Activated naive CD4-positive, alpha-beta T cell treated with anti-CD3 and anti-CD28 coated beads for 36 hours (primary cell): ENCODE measurements at regions of chr14 and their contacts with region 1.

Region 1: GRCh38 chr14:68420350-68420749 is 372.5 kb downstream of the ZFP36L1 start:
- DNase-seq: no peak
- H3K4me3 Mint-ChIP-seq: no peak overlapping the region
- H3K27ac Mint-ChIP-seq: no peak overlapping the region
- H3K4me1 Mint-ChIP-seq: peaks cover 14% of the 10 kb centered on the region
- H3K27me3 Mint-ChIP-seq: no peaks in the 10 kb centered on the region

Region 2: DNA sequence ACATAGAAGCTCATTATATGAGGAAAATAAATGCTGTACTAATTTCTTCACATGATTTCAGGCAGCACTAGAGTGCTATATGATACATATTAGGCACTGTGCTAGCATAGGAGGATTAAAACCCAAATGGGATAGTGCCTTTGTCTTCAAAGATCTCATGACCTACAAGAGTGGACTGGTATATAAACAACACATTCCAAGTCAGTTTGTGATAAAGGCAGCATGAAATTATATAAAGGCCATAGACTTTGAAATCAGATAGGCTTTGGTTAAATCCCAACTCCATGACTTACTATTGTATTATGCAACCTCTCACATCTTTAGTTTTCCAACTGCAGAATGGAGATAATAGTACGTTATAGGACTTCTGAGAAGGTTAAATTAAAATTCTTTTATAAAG is 421.1 kb before region 1 on chr14:
- CTCF ChIA-PET with region 1: no interaction called
- intact Hi-C with region 1: no loop called
- DNase-seq: no peak
- H3K4me3 Mint-ChIP-seq: no peak overlapping the region
- H3K27ac Mint-ChIP-seq: no peak overlapping the region
- H3K4me1 Mint-ChIP-seq: no peaks in the 10 kb centered on the region
- H3K27me3 Mint-ChIP-seq: no peaks in the 10 kb centered on the region

Region 3: DNA sequence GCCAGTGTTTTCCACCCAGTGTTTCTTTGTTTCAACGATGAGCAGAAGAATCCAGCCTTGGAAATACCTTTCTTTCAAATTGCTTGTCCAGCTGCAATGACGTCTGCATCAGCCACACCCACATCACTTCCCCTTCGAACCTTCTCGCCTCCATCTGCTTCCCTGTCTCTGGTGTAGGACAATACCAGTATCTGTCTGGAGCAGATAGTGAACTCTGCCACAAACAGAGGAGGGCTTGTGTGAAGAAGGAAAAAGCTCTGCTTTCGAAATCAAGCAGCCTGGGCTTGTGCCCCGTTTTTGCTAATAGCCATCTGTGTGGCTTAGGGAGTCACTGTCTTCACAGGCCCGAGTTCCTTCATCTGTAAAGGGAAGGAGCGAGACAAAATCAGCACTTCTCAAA is 42.9 kb before region 1 on chr14:
- CTCF ChIA-PET with region 1: no interaction called
- intact Hi-C with region 1: loop called (anchors 1 kb)
- DNase-seq: peak; percentile 6
- H3K4me3 Mint-ChIP-seq: no peak overlapping the region
- H3K27ac Mint-ChIP-seq: no peak overlapping the region
- H3K4me1 Mint-ChIP-seq: peaks cover 50% of the 10 kb centered on the region
- H3K27me3 Mint-ChIP-seq: no peaks in the 10 kb centered on the region

Region 4: GRCh38 chr14:68442828-68443629 is 22.7 kb after region 1 on chr14:
- CTCF ChIA-PET with region 1: no interaction called
- intact Hi-C with region 1: no loop called
- DNase-seq: no peak
- H3K4me3 Mint-ChIP-seq: no peak overlapping the region
- H3K27ac Mint-ChIP-seq: no peak overlapping the region
- H3K4me1 Mint-ChIP-seq: peaks cover 2% of the 10 kb centered on the region
- H3K27me3 Mint-ChIP-seq: no peaks in the 10 kb centered on the region